ENCODE measurements at regions of chr19 and their contacts with region 1.

Region 1: DNA sequence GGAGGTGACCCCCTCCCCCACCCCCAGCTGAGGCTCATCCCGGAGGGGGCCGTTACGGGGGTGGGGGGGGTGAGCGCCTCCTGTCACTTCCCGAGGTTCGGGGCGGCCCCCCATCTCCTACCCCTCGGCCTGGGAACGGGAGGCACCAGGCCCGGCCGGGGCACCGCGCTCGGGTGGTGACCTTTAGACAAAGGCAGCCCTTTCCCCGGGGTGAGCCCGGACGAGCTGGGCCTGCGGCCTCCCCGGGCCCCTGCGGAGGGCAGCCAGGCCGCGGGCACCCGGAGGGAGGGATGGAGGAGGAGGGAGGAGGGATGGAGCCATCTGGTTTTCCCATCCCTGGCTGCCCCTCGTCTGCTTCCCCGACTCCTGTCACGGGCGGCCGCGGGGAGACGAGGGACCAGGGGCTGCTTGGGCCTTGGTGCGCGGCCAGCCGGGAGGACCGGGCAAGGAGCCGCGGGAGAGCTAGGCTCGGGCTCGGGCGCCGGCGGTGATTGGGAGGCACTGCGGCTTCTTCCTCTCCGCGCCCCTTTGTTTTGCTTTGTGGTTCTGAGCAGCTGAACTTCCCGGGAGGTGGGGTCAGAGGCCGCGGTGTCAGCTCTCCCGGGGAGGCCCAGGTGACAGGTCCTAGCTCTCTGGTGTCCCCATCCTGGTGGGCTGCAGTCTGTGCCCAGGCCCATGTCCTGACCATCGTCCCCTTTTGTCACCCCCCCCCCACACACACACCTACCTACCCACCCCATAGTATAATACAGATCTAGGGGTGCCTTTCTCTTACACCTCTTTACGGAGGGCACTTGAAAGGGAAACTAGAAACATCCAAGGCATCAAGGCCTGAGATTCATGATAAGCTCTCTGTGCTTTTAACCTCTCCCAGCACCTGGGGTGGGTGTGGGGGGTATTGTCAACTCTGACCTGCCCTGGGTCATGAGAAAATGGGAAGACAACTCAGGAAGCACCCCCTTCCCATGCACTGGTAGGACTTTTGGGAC is 1.3 kb downstream of the BICRA start:
- DNase-seq: no peak
- H3K4me3 ChIP-seq: peak overlapping the region; percentile 97
- CTCF ChIP-seq: no peak

Region 2: DNA sequence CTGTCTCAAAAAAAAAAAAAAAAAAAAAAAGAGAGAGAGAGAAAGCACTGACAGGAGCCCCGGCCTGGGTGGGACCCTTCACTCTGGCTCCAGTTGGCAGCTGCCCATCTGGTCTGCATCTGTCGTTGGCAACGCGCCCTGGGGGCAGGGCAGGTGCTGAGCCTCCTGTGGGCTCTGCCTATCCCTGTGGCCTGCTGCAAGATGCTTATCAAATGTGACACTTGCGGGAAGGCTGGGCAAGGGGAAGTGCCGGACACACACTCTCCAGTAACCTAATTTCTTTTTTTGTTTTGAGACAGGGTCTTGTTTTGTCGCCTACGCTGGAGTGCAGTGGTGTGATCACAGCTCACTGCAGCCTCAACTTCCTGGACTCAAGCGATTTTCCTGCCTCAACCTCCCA is 115.5 kb before region 1 on chr19:
- in situ Hi-C with region 1: loop called (anchors 5 kb)
- DNase-seq: no peak
- H3K4me3 ChIP-seq: no peak overlapping the region
- CTCF ChIP-seq: no peak

Region 3: GRCh38 chr19:47549261-47549862 is 60.8 kb before region 1 on chr19:
- in situ Hi-C with region 1: no loop called
- DNase-seq: no peak
- H3K4me3 ChIP-seq: no peak overlapping the region
- CTCF ChIP-seq: no peak

Region 4: GRCh38 chr19:47561440-47562057 is 48.7 kb before region 1 on chr19:
- in situ Hi-C with region 1: loop called (anchors 5 kb)
- DNase-seq: no peak
- H3K4me3 ChIP-seq: no peak overlapping the region
- CTCF ChIP-seq: no peak

Region 5: DNA sequence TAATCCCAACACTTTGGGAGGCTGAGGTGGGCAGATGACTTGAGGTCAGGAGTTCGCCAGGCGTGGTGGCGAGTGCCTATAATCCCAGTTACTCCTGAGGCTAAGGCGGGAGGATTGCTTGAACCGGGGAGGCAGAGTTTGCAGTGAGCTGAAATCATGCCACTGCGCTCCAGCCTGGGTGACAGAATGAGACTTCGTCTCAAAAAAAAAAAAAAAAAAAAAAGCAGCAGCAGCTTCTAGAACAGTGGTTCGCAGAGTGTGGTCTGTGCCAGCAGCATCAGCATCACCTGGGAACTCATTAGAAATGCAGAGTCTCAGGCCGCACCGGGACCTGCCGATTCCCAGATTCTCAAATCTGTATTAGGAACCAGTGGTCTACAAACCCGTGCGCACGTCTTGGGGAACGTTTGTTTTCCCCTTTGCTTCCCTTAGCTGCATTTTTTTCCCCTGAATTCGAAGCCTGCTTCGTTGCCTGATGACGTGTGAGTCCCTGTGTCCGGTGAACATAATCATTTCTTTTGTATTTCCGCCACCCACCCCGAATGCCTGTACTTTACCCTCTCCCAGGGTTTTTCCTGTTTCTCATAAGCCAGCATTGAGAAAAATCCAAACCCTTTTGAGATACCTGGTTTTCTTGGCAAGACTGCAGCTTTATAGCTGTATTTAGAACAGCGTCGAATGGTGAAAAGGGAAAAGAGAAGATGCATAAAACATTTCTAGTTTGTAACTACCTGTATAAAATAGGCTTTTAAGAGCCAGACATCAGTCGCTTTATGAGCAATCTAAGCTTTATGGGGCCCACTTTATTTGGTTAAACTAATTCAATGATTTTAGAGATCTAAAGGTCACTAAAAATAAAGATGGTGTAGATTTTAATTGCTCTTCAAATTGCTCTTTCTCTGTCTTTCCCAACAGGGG is 48.5 kb after region 1 on chr19:
- in situ Hi-C with region 1: loop called (anchors 5 kb)
- DNase-seq: peak; percentile 53
- H3K4me3 ChIP-seq: no peak overlapping the region
- CTCF ChIP-seq: no peak

Measured in astrocyte of the cerebellum (primary cell).